ENCODE measurements at regions of chr4 and their contacts with region 1.

Region 1: GRCh38 chr4:173168396-173169177 is at the start of gene GALNT7:
- DNase-seq: peak; percentile 32 to 77 (median 58)
- H3K4me3 ChIP-seq: peak within 1 kb of the TSS; percentile 59 to 94 (median 83)
- H3K27ac ChIP-seq: peak within 1 kb of the TSS; percentile 55 to 97 (median 90)
- H3K27me3 ChIP-seq: no peaks in the 10 kb centered on the region
- CTCF ChIP-seq: peak in 1 of 56 donors; percentile 10
- total RNA-seq, gene GALNT7: 14.2 to 37.5 (median 20.9) TPM

Region 2: DNA sequence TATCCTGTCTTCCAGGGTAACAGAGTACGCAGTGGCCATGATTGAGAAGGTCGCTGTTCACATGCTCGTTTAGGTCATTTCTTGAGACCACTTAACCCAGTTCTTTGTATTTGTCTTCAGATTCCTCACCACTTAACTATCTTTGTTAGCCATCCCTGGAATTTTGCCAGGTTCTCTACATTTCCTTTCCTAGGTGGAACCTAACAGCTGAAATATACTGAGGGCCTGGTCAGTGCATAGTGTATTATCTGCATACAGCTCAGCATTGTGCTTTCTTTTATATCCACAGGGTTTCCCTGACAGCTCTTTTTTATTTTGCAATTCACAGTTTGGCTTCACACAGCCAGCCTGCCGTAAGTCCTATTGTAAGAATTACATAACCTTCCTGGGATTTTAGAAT is 148.9 kb before region 1 on chr4:
- intact Hi-C with region 1: loop called (anchors 5 to 10 kb)
- DNase-seq: no peak
- H3K4me3 ChIP-seq: no peak overlapping the region
- H3K27ac ChIP-seq: peak overlapping the region in 1 of 59 donors; percentile 9
- H3K27me3 ChIP-seq: no peaks in the 10 kb centered on the region
- CTCF ChIP-seq: no peak

Region 3: DNA sequence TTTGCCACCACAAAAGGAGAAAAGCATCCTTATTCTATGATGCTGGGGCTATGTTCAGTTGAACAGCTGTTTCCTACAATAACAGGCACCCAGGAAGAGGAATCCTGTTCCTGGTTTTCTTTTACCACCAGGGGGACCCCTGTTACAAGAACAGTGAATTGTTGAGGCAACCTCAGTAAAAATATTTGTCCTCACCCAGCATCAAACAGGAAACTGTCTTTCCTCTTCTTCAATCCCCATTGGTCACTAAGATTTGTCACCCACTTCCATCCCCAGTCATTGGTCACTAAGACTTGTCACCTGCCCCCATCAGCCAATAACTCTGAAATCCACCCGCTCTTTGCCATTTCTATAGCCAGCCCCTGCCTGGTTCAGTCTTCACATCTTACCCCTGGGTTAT is 143.5 kb before region 1 on chr4:
- intact Hi-C with region 1: loop called (anchors 5 to 10 kb)
- DNase-seq: peak in 4 of 10 donors; percentile 25 to 70 (median 42)
- H3K4me3 ChIP-seq: no peak overlapping the region
- H3K27ac ChIP-seq: no peak overlapping the region
- H3K27me3 ChIP-seq: no peaks in the 10 kb centered on the region
- CTCF ChIP-seq: peak; percentile 55 to 88 (median 78)

Region 4: GRCh38 chr4:173243917-173244658 is 75.5 kb after region 1 on chr4:
- intact Hi-C with region 1: loop called in 1 of 2 experiments (anchors 5 kb)
- DNase-seq: no peak
- H3K4me3 ChIP-seq: no peak overlapping the region
- H3K27ac ChIP-seq: no peak overlapping the region
- H3K27me3 ChIP-seq: no peaks in the 10 kb centered on the region
- CTCF ChIP-seq: no peak

Region 5: DNA sequence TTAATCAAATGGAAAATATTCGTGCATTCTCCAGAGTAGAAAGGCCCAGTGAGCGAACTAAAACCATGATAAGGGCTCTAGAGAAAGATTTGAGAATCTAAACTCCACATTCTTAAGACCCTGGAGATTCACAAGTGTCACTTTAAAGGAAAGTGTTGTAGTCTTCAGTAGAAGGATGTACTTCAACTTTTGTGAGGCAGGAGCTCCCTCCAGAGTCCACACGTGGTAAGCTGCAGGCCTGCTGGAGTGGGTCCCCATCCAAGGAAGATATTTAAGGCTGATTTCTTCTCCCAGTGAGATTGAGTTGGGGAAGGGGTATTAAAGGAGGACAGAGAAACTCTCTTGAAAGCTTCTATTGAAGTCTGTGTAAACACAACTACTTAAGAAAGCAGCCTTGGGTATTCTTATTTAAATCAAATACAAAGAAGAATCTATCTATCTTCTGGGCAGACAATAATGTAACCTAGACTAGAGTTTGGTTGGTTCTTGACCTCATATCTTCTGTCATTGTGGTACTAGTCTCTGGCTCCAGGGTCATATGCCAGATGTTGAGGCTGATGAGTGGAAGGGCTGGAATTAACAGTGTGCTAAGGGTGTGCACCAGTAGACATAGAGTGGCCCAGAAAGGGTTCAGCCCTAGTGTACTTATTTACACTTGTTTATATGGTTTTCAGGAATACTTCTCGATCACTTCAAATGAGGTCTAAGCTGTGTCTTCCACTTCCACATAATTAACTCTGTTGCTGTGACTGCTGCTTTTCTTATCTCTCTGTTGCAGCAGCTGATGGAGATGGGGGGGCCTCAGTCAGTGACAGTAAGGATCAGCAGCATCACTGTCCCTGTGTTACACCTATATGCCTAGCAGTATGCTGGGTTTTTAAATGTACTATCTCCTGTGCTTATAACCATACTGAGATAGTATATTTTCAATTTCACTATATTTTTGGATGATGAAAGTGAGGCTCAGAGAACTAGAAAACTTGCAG is 89.4 kb after region 1 on chr4:
- intact Hi-C with region 1: loop called in 1 of 2 experiments (anchors 5 kb)
- DNase-seq: peak; percentile 56 to 86 (median 76)
- H3K4me3 ChIP-seq: no peak overlapping the region
- H3K27ac ChIP-seq: peak overlapping the region in 2 of 59 donors; percentile 29 to 51
- H3K27me3 ChIP-seq: no peaks in the 10 kb centered on the region
- CTCF ChIP-seq: peak; percentile 53 to 95 (median 82)